GM10248 (cell line): ENCODE measurements at regions of chr7 and their contacts with region 1.

Region 1: DNA sequence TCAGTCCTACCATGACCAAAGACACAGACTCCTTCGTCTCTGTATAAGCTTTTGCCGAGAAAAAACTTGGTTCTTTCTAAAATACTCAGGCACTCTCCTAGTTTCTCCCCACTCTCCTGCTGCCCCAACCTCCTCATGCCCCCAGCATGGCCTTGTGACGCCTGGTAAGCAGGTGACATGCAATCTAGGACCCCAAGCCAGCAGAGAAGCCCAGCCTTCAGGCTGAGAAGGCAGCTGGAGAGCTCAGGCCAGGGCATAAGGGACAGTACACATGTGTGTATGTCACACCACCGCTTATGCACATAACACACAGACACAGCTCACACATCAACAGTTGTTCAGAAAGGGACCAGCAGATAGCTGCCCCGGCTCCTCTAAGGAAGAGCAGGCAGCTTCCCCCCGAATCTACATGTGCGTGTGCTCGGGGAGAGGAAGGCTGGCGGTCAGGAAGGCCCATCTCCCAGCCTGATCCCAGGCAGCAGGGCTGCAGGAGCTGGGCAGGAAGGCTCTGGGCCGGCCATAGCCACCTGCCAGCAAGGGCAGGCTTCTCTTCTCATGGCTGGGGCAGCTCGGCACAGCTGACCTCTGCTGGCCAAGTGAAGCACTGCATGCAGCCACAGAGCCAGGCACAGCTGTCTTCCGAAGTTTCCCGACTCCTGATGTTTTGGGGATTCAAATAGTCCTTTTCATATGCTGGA is 8.5 kb downstream of the DDX56 start:
- DNase-seq: peak; percentile 82
- CTCF ChIP-seq: peak; percentile 97

Region 2: DNA sequence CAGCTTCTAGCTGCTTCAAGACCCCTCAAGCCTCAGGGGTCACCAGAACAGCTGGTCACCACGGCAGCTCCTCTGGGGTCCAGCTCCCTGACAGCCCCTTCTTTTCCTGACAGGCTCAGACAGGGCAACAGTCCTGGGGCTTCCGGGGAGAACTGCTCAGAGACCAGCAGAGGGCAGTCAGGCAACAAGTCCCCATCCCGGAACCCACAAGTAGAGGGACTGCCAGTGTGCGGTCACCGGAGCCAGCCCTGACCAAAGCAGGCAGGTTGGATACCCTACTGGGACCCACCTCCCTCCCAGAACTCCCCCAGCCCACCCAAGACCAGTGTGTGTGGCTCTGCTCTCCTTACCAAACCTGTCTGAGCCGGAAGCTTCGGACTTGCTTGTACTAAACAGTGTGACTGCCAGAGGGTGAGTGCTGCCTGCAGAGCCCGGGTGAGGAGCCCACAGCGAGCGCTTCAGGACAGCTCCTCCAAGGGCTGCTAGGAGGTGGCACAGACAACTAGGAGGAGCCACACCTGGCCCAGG is 324.2 kb before region 1 on chr7:
- CTCF ChIA-PET with region 1: interaction called, 65 read pairs
- POLR2A ChIA-PET with region 1: no interaction called
- DNase-seq: peak; percentile 90
- CTCF ChIP-seq: peak; percentile 86

Region 3: DNA sequence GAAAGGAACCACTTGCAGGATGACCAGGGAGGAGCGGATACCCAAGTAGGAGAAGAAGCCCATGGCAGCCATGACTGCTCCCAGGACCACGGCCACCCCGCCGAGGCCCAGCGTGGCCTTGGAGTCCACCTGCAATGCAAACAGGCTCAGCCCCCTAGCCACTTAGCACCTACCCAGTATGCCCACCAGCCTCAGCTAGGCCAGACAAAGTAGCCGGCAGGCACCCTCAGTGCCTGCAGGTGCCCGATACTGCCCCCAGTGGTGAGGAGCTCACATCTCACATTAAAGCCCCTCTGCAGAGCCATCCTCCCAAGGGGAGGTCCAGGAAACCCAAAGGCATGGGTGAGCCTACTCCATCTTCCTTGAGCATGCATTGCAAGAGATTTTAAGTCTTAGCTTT is 30.7 kb before region 1 on chr7:
- CTCF ChIA-PET with region 1: interaction called, 29 read pairs
- POLR2A ChIA-PET with region 1: no interaction called
- DNase-seq: peak; percentile 86
- CTCF ChIP-seq: peak; percentile 44

Region 4: GRCh38 chr7:44547536-44548231 is 17.6 kb before region 1 on chr7:
- CTCF ChIA-PET with region 1: interaction called, 25 read pairs
- POLR2A ChIA-PET with region 1: interaction called, 3 read pairs
- DNase-seq: no peak
- CTCF ChIP-seq: no peak

Region 5: GRCh38 chr7:44894888-44895580 is 329.8 kb after region 1 on chr7:
- CTCF ChIA-PET with region 1: no interaction called
- POLR2A ChIA-PET with region 1: no interaction called
- DNase-seq: no peak
- CTCF ChIP-seq: no peak

Region 6: GRCh38 chr7:45136106-45137060 is 571.1 kb after region 1 on chr7:
- CTCF ChIA-PET with region 1: interaction called, 12 read pairs
- POLR2A ChIA-PET with region 1: no interaction called
- DNase-seq: peak; percentile 85
- CTCF ChIP-seq: peak; percentile 82